Posterior cingulate gyrus (tissue), 11 donors: ENCODE measurements at regions of chr11 and their contacts with region 1.

Region 1: GRCh38 chr11:47010179-47010578 is 73.6 kb downstream of the CSTPP1 start:
- DNase-seq: no peak

Region 2: GRCh38 chr11:47051217-47051616 is 41.0 kb after region 1 on chr11:
- intact Hi-C with region 1: no loop called
- DNase-seq: no peak

Region 3: GRCh38 chr11:47111318-47111804 is 101.2 kb after region 1 on chr11:
- intact Hi-C with region 1: no loop called
- DNase-seq: no peak

Region 4: GRCh38 chr11:47143322-47143721 is 133.1 kb after region 1 on chr11:
- intact Hi-C with region 1: loop called (anchors 10 kb)
- DNase-seq: no peak